Endothelial cell of umbilical vein (primary cell): ENCODE measurements at regions of chr6 and their contacts with region 1.

Region 1: GRCh38 chr6:156348424-156348823 is 428.8 kb upstream of the ARID1B start:
- DNase-seq: peak; percentile 86
- H3K4me3 ChIP-seq: peak overlapping the region in 1 of 3 experiments; percentile 20
- H3K27ac ChIP-seq: peak overlapping the region; percentile 46
- H3K4me1 ChIP-seq: peaks cover 23% of the 10 kb centered on the region
- H3K27me3 ChIP-seq: no peaks in the 10 kb centered on the region
- CTCF ChIP-seq: no peak
- POLR2A ChIP-seq: no peak

Region 2: DNA sequence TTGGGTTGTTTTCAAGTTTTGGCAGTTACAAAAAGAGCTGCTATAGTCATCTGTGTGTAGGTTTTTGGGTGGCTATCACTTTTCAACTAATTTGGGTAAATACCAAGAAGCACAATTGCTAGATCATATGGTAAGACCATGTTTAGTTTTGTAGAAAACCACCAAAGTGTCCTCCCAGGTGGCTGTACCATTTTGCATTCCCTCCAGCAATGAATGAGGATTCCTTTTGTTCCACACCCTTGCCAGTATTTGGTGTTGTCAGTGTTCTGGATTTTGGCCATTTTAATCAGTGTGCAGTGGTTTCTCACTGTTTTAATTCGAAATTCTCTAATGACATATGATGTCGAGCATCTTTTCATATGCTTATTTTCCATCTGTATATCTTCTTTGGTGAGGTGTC is 28.7 kb before region 1 on chr6:
- CTCF ChIA-PET with region 1: no interaction called
- POLR2A ChIA-PET with region 1: no interaction called
- dilution Hi-C with region 1: no loop called
- intact Hi-C with region 1: no loop called
- DNase-seq: no peak
- H3K4me3 ChIP-seq: no peak overlapping the region
- H3K27ac ChIP-seq: no peak overlapping the region
- H3K4me1 ChIP-seq: no peaks in the 10 kb centered on the region
- H3K27me3 ChIP-seq: no peaks in the 10 kb centered on the region
- CTCF ChIP-seq: no peak
- POLR2A ChIP-seq: no peak

Region 3: GRCh38 chr6:156410649-156411048 is 62.2 kb after region 1 on chr6:
- CTCF ChIA-PET with region 1: no interaction called
- POLR2A ChIA-PET with region 1: no interaction called
- dilution Hi-C with region 1: no loop called
- intact Hi-C with region 1: loop called (anchors 5 kb)
- DNase-seq: peak; percentile 4
- H3K4me3 ChIP-seq: no peak overlapping the region
- H3K27ac ChIP-seq: no peak overlapping the region
- H3K4me1 ChIP-seq: no peaks in the 10 kb centered on the region
- H3K27me3 ChIP-seq: no peaks in the 10 kb centered on the region
- CTCF ChIP-seq: no peak
- POLR2A ChIP-seq: no peak